PC-3 (cell line): ENCODE measurements at regions of chr2 and their contacts with region 1.

Region 1: GRCh38 chr2:205766779-205767359 is 84.6 kb downstream of the NRP2 start:
- DNase-seq: peak; percentile 73
- ATAC-seq: no peak
- H3K4me3 ChIP-seq: no peak overlapping the region
- H3K27ac ChIP-seq: no peak overlapping the region
- H3K4me1 ChIP-seq: peaks cover 18% of the 10 kb centered on the region
- H3K27me3 ChIP-seq: no peaks in the 10 kb centered on the region
- CTCF ChIP-seq: peak; percentile 93

Region 2: DNA sequence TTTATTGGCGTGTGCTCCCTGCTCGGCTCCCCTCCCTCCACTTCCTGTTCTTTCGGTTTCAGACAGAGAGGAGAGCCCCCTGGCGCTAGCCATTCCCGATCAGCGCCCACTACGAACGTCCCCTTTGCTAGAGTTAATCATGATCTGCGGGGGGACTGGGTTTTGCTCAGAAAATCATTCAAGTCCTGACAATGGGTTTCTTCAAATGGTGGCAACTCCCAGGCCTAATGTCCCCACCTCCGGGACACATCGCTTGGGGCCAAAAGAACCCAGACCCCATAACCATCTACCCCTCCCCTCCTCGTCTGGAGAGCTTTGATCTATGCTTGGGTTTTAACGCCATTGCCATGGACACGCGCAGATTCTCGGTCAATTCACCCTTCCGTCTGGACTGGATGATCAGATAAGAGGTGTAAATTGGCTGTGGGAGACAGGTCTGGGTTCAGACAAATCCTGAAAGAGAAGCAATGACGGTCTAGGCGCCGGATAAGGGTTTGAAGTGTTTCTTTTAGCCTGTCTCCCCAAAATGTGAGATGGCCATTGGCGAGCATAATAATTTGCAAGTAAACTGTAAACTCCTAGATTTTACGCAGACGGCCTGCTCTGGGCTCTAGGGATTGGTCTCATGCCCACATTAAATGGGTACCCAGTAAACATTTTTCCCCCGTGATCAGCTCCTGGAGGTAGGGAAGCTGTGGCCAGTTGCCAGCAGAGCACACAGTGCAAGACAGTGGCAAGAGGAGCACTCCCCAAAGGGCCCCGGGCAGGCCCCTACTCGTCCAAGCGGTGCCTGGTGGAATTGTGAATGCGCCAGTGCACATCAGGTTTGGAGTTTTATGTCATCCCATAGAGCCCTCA is 79.9 kb before region 1 on chr2:
- CTCF ChIA-PET with region 1: no interaction called
- POLR2A ChIA-PET with region 1: no interaction called
- intact Hi-C with region 1: loop called (anchors 1 kb)
- DNase-seq: no peak
- ATAC-seq: no peak
- H3K4me3 ChIP-seq: no peak overlapping the region
- H3K27ac ChIP-seq: no peak overlapping the region
- H3K4me1 ChIP-seq: peaks cover 24% of the 10 kb centered on the region
- H3K27me3 ChIP-seq: no peaks in the 10 kb centered on the region
- CTCF ChIP-seq: no peak

Region 3: DNA sequence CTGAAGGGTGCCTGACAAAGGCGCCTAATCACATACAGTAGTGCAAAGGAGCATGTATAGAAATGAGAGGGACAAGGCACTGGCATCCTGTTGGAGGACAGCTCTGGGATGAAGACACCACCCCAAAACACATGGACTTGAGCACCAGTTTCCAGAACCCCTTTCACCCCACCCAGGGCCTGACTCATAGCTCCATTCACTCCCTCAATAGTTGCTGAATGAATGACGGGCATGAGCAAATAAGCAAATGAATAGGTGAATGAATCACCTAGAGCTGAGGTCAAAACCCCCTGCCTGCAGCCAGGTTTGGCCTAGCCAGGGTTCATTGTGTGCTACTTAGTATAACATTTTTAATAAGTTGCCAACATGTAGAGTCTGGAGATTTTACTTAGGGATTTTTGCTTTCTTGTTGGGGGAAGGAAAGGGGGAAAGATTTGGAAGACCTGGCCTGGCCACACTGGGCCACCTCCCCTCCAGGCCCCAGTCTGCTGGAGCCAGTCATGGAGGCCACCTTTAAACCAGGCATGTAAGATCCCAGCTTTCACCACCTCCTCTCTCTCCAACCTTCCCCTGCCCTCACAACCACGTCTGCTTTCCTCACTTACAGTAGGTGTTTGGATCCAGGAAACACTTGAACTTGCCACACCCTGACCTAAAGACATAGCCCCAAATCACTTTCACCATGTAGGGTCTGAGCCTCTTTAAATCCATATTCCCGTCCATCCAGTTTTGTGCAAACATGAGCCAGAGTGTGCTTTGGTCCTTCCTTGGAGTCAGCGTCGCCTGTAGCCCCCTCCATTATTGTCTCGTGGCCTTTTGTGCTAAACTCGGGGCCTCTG is 18.0 kb before region 1 on chr2:
- CTCF ChIA-PET with region 1: no interaction called
- POLR2A ChIA-PET with region 1: no interaction called
- intact Hi-C with region 1: loop called (anchors 2 kb)
- DNase-seq: peak; percentile 93
- ATAC-seq: peak; percentile 72
- H3K4me3 ChIP-seq: 0 out of 2 replicates have a peak overlapping the region, but pooled peaks have one; percentile 9
- H3K27ac ChIP-seq: peak overlapping the region; percentile 99
- H3K4me1 ChIP-seq: peaks cover 69% of the 10 kb centered on the region
- H3K27me3 ChIP-seq: no peaks in the 10 kb centered on the region
- CTCF ChIP-seq: no peak

Region 4: DNA sequence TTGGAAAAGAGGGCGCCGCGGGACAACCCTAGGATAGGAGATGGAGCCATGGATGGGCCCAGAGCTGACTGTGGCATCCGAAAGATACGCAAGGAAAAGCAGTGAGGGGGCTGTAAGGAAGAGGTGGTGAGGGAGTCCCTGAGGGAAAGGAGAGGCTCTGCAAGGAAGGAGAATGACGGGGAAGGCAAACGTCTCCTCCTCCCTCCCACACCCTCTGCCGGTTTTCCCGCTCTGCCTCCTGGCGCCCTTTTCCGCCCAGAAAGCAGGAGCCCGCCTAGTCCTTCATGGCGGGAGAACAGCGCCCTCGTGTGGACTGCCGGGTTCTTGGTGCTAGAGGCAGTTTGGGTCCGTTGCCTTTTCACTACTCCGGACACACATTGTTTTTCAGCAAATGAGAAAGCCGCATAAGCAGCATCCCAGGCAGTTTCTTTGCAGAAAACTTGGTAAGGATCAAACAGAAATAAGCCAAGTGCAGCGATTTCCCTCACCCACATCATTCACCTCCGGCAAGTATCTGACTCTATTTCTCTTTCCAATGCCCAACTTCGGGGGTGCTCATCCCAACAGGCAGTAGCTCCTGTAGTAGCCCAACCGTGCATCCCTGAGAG is 118.7 kb after region 1 on chr2:
- CTCF ChIA-PET with region 1: no interaction called
- POLR2A ChIA-PET with region 1: no interaction called
- intact Hi-C with region 1: loop called (anchors 5 kb)
- DNase-seq: peak; percentile 89
- ATAC-seq: peak; percentile 91
- H3K4me3 ChIP-seq: no peak overlapping the region
- H3K27ac ChIP-seq: no peak overlapping the region
- H3K4me1 ChIP-seq: peaks cover 4% of the 10 kb centered on the region
- H3K27me3 ChIP-seq: 0 out of 2 replicates have a peak, but pooled peaks cover 3% of the 10 kb centered on the region
- CTCF ChIP-seq: peak; percentile 90

Region 5: GRCh38 chr2:205947621-205948495 is 181.0 kb after region 1 on chr2:
- CTCF ChIA-PET with region 1: no interaction called
- POLR2A ChIA-PET with region 1: no interaction called
- intact Hi-C with region 1: loop called (anchors 5 kb)
- DNase-seq: peak; percentile 70
- ATAC-seq: peak; percentile 73
- H3K4me3 ChIP-seq: 0 out of 2 replicates have a peak overlapping the region, but pooled peaks have one; percentile 3
- H3K27ac ChIP-seq: no peak overlapping the region
- H3K4me1 ChIP-seq: no peaks in the 10 kb centered on the region
- H3K27me3 ChIP-seq: no peaks in the 10 kb centered on the region
- CTCF ChIP-seq: peak; percentile 96